ENCODE measurements at regions of chr12 and their contacts with region 1.

Region 1: DNA sequence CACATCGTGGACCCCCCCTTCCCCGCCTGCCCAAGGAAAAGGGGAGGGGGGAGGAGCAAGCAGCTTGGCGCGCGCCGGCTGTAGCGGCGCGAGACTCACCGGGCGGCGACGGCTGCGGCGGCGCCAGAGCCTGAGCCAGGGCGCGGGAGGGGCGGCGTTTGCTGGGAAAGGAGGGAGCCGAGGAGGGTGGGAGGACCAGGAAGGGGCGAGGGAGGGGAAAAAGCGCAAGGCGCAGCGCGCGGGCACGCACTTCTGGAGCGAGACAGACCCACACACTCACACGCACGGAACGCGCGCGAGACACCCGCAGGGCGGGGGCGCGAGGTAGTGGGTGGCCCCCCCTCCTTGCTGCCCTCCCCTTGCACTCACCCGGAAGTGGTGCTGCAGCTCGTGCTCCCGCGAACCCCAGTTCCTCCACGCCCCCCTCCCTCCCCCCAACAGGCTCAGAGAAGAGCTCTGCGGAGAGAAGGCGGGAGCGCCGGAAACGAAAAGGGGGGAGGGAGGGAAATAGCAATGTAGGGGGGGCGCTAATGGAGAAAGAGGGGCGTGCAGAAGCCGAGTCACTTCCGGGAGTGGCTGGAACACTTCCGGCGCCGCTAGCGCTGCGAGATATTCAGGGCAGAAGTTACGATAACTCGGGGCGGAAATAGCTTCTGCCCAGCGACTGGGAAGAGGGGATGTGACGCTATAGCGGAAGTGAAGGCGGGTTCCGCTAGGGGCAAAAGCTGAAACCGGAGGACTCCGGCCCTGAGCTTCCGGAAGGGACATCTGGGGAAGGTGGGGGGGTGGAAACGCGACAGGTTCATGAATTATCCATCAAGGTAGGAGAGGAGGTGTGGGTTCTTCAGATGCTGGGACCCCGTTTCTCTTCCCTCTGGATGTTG is at the start of gene ZNF384:
- DNase-seq: peak; percentile 99
- ATAC-seq: peak; percentile 76
- H3K4me3 ChIP-seq: peak within 1 kb of the TSS; percentile 53 to 95 (median 93)
- H3K4me3 Mint-ChIP-seq: peak within 1 kb of the TSS; percentile 94
- H3K27ac ChIP-seq: peak within 1 kb of the TSS; percentile 75 to 91
- H3K27ac Mint-ChIP-seq: peak within 1 kb of the TSS; percentile 97
- H3K4me1 ChIP-seq: peaks cover 28 to 29% of the 10 kb centered on the region in 2 donors
- H3K4me1 Mint-ChIP-seq: peaks cover 55% of the 10 kb centered on the region
- H3K27me3 ChIP-seq: no peaks in the 10 kb centered on the region
- H3K27me3 Mint-ChIP-seq: no peaks in the 10 kb centered on the region
- CTCF ChIP-seq: no peak
- total RNA-seq, gene ZNF384: 108 and 115 TPM in 2 replicates

Region 2: DNA sequence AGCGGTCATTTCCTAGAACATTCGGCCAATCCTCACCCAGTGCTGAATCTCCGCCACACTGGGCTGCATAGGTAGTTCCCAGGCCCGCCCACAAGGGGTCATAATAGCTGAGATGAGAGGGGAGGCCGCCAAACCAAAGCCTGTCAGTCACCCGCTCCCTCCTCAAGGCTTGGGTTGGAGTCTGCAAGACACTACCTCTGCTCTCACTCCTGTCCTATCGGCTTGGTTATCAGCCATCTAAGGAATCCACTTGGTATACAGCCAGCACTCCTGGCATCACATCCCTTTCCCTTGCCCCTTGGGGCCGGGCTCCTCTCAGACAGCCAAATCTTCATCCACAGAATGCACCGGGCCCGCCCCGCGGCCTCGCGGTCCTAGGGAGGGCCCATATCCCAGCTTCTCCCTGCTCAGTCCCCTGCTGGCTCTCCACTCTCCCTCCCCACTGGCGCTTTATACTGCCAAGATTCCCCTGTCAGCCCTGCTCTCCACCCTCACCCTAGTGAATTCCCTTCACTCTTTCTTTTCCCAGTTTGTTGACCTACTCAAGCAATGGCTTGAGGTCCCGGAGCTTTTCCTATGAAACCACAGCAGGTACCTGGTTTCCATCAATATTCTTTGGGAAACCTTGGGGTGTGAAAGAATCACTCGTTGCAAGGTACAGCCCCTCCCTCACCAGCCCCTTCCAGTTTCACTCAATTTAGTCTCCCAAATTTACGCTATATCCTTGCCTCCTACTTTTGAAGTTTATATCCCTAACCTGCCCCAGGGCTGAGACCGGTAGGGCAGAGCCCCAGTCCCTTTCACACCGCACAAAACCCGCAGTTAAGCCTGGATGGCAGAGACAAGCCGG is 134.8 kb before region 1 on chr12:
- CTCF ChIA-PET with region 1: interaction called, 12 read pairs
- POLR2A ChIA-PET with region 1: interaction called, 5 read pairs
- intact Hi-C with region 1: loop called (anchors 1 kb)
- DNase-seq: peak; percentile 82
- ATAC-seq: peak; percentile 70
- H3K4me3 ChIP-seq: peak overlapping the region in 4 of 5 experiments; percentile 52 to 93 (median 84)
- H3K4me3 Mint-ChIP-seq: peak overlapping the region; percentile 89
- H3K27ac ChIP-seq: no peak overlapping the region
- H3K27ac Mint-ChIP-seq: peak overlapping the region; percentile 67
- H3K4me1 ChIP-seq: peaks cover 12 to 38% of the 10 kb centered on the region in 2 donors
- H3K4me1 Mint-ChIP-seq: peaks cover 36% of the 10 kb centered on the region
- H3K27me3 ChIP-seq: no peaks in the 10 kb centered on the region
- H3K27me3 Mint-ChIP-seq: no peaks in the 10 kb centered on the region
- CTCF ChIP-seq: peak; percentile 81

Region 3: GRCh38 chr12:6613776-6614512 is 75.3 kb before region 1 on chr12:
- CTCF ChIA-PET with region 1: interaction called, 19 read pairs
- POLR2A ChIA-PET with region 1: interaction called, 12 read pairs
- intact Hi-C with region 1: loop called (anchors 1 kb)
- DNase-seq: peak; percentile 81
- ATAC-seq: peak; percentile 48
- H3K4me3 ChIP-seq: no peak overlapping the region
- H3K4me3 Mint-ChIP-seq: peak overlapping the region; percentile 24
- H3K27ac ChIP-seq: peak overlapping the region; percentile 63 to 88
- H3K27ac Mint-ChIP-seq: peak overlapping the region; percentile 87
- H3K4me1 ChIP-seq: peaks cover 32 to 51% of the 10 kb centered on the region in 2 donors
- H3K4me1 Mint-ChIP-seq: peaks cover 65% of the 10 kb centered on the region
- H3K27me3 ChIP-seq: no peaks in the 10 kb centered on the region
- H3K27me3 Mint-ChIP-seq: no peaks in the 10 kb centered on the region
- CTCF ChIP-seq: no peak

Region 4: DNA sequence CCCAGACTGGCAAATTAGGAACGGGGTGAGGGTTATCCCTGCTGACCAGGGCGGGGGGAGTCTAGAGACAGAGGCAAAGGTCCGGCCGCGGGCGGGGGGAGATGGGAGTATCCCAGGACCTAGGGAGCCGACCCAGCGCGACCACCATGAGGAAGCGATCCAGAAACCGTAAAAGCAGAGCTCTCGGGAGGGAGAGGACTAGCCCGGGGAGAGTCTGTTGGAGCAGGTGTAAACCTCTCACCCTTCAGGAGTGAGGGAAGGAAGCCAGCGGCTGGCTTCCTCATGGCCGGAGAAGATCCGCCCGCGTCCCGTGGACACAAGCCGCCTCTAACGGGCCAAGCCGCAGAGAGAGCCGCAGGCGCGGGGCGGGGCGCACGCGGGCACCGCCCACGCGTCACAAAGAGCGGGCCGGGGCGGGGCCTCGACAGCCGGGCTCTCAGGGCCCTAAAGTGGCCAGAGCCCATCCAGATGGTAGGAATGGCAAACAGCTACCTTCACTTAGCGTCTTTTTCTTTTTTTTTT is 42.1 kb before region 1 on chr12 and contains the start of gene ACRBP:
- CTCF ChIA-PET with region 1: interaction called, 12 read pairs
- POLR2A ChIA-PET with region 1: interaction called, 3 read pairs
- intact Hi-C with region 1: no loop called
- DNase-seq: peak; percentile 73
- ATAC-seq: peak; percentile 83
- H3K4me3 ChIP-seq: peak within 1 kb of the TSS; percentile 31 to 77 (median 60)
- H3K4me3 Mint-ChIP-seq: peak within 1 kb of the TSS; percentile 83
- H3K27ac ChIP-seq: peak within 1 kb of the TSS in 1 of 2 donors; percentile 60
- H3K27ac Mint-ChIP-seq: peak within 1 kb of the TSS; percentile 68
- H3K4me1 ChIP-seq: peaks cover 24 to 43% of the 10 kb centered on the region in 2 donors
- H3K4me1 Mint-ChIP-seq: peaks cover 40% of the 10 kb centered on the region
- H3K27me3 ChIP-seq: no peaks in the 10 kb centered on the region
- H3K27me3 Mint-ChIP-seq: no peaks in the 10 kb centered on the region
- CTCF ChIP-seq: no peak
- total RNA-seq, gene ACRBP: 11.9 and 12.3 TPM in 2 replicates

Region 5: GRCh38 chr12:6752921-6753771 is 63.9 kb after region 1 on chr12 and contains the start of gene MLF2:
- CTCF ChIA-PET with region 1: interaction called, 20 read pairs
- POLR2A ChIA-PET with region 1: interaction called, 16 read pairs
- intact Hi-C with region 1: loop called (anchors 1 kb)
- DNase-seq: peak; percentile 98
- ATAC-seq: peak; percentile 87
- H3K4me3 ChIP-seq: peak within 1 kb of the TSS; percentile 75 to 93 (median 79)
- H3K4me3 Mint-ChIP-seq: peak within 1 kb of the TSS; percentile 96
- H3K27ac ChIP-seq: peak within 1 kb of the TSS; percentile 93 to 96
- H3K27ac Mint-ChIP-seq: peak within 1 kb of the TSS; percentile 99
- H3K4me1 ChIP-seq: peaks cover 13 to 14% of the 10 kb centered on the region in 2 donors
- H3K4me1 Mint-ChIP-seq: peaks cover 17% of the 10 kb centered on the region
- H3K27me3 ChIP-seq: no peaks in the 10 kb centered on the region
- H3K27me3 Mint-ChIP-seq: peaks cover 4% of the 10 kb centered on the region
- CTCF ChIP-seq: peak; percentile 89
- total RNA-seq, gene MLF2: 97.2 and 106 TPM in 2 replicates

Region 6: GRCh38 chr12:6834873-6835272 is 145.6 kb after region 1 on chr12:
- CTCF ChIA-PET with region 1: interaction called, 3 read pairs
- POLR2A ChIA-PET with region 1: interaction called, 10 read pairs
- intact Hi-C with region 1: no loop called
- DNase-seq: no peak
- ATAC-seq: no peak
- H3K4me3 ChIP-seq: no peak overlapping the region
- H3K4me3 Mint-ChIP-seq: no peak overlapping the region
- H3K27ac ChIP-seq: no peak overlapping the region
- H3K27ac Mint-ChIP-seq: no peak overlapping the region
- H3K4me1 ChIP-seq: peaks cover 0 to 17% of the 10 kb centered on the region in 2 donors
- H3K4me1 Mint-ChIP-seq: peaks cover 12% of the 10 kb centered on the region
- H3K27me3 ChIP-seq: peaks cover 0 to 24% (median 4%) of the 10 kb centered on the region in 4 experiments
- H3K27me3 Mint-ChIP-seq: peaks cover 29% of the 10 kb centered on the region
- CTCF ChIP-seq: no peak